ENCODE measurements at regions of chr1 and their contacts with region 1.

Region 1: DNA sequence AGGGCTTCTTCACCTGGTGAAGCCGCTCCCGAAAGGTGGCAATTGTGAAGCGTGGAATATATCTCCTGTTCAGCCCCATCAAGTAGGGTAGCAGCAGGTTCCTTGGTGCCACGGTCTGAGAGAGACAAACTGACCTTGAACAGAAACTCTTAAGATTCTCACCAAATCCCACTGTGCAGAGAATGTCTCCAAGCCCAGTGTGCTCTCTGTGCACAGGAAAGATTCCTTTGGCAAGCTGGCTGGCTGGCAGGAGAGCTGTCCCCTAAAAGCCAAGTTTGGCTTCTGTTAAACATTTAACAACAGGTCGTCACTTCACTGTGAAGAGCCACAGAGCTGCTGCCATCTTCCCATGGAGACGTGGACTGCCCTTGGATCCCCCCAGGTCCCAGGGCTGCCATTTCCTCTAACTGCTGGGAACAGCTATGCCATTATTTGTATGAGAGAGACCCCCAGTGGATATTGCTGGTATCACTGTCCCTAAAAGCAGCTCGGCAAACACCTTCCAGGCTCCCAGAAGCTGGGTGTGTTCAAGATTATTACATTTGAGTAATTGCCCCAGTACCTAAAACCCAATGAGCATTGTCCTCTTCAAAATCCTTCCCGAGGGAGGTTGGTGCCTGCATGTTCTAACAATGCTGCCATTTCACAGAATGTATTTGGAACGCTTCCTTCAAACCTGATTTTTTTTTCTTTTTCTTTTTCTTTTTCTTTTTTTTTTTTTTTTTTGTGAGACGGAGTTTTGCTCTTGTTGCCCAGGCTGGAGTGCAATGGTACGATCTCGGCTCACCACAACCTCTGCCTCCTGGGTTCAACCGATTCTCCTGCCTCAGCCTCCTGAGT is 71.8 kb downstream of the CD58 start:
- DNase-seq: peak in 1 of 2 donors; percentile 60
- ATAC-seq: peak; percentile 85 to 93 (median 90)
- H3K4me3 ChIP-seq: no peak overlapping the region
- H3K27ac ChIP-seq: no peak overlapping the region
- H3K4me1 ChIP-seq: peaks cover 3% of the 10 kb centered on the region
- H3K27me3 ChIP-seq: no peaks in the 10 kb centered on the region
- CTCF ChIP-seq: peak; percentile 83

Region 2: DNA sequence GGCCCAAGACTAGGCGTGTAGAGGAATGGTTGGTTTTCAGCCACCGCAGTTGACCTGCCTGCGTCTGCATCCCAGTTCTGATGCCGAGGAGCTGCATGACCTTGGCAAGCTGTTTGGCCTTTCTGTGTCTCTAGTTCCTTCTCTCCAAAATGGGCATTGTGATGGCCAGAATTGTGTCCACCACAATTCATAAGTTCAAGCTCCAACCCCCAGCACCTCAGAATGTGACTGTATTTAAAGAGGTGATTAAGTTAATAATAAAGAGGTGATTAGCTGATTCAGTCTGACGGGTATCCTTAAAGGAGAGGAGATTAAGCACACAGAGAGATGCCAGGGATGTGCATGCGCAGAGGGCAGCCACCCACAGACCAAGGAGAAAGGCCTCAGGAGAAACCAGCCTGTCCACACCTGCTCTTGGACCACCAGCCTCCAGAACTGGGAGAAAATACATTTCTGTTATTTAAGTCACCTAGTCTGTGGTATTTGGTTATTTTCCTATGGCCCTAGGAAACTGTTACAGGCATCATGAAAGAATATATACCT is 359.3 kb before region 1 on chr1:
- intact Hi-C with region 1: loop called (anchors 1 to 2 kb)
- DNase-seq: no peak
- ATAC-seq: no peak
- H3K4me3 ChIP-seq: no peak overlapping the region
- H3K27ac ChIP-seq: no peak overlapping the region
- H3K4me1 ChIP-seq: no peaks in the 10 kb centered on the region
- H3K27me3 ChIP-seq: no peaks in the 10 kb centered on the region
- CTCF ChIP-seq: no peak

Measured in psoas muscle (tissue), 8 donors.